Esophagus squamous epithelium (tissue), 5 donors: ENCODE measurements at regions of chr3 and their contacts with region 1.

Region 1: GRCh38 chr3:43162230-43163084 is 56.6 kb upstream of the POMGNT2 start:
- DNase-seq: no peak
- H3K4me3 ChIP-seq: peak overlapping the region in 1 of 4 donors; percentile 37
- H3K27ac ChIP-seq: peak overlapping the region in 2 of 4 donors; percentile 57 to 58
- H3K4me1 ChIP-seq: peaks cover 0 to 14% (median 7%) of the 10 kb centered on the region in 3 donors
- H3K27me3 ChIP-seq: peaks cover 0 to under 1% (median 0%) of the 10 kb centered on the region in 4 donors
- CTCF ChIP-seq: peak in 5 of 6 experiments; percentile 28 to 60 (median 33)
- POLR2A ChIP-seq: no peak

Region 2: GRCh38 chr3:43378066-43378935 is 215.8 kb after region 1 on chr3:
- intact Hi-C with region 1: loop called (anchors 5 kb)
- DNase-seq: no peak
- H3K4me3 ChIP-seq: no peak overlapping the region
- H3K27ac ChIP-seq: peak overlapping the region in 3 of 4 donors; percentile 58 to 68 (median 65)
- H3K4me1 ChIP-seq: peaks cover 0 to 15% (median 0%) of the 10 kb centered on the region in 3 donors
- H3K27me3 ChIP-seq: no peaks in the 10 kb centered on the region
- CTCF ChIP-seq: peak; percentile 27 to 81 (median 66)
- POLR2A ChIP-seq: no peak

Region 3: DNA sequence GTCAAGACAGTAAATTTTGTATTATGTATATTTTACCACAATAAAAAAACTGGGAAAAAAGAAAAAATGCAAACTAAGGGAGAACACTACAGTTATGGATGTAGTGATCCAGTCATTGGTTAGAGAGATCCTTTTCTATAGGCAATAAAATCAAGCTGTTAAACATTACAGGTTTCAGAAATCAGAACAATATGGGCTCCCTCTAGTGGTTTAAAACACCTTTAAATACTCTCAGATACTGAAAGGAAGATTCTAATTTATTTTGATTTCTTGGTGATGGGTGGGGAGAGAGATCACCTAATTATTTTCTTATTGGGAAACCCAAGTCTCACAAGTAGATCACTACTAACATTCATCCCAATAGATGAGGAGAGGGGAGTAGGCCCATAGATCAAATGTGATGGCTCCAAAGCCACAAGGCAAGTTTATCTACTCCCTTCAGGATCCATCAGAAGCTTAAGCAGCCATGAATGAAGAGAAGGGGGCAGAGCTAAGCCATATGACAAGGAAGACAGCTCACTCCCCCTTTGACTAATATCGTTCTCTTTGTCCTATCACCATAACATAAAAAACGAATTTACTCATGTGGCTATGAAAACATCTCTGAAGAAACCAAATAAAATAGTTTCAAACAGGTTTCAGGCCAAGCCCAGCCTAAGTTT is 340.7 kb after region 1 on chr3:
- intact Hi-C with region 1: loop called (anchors 10 kb)
- DNase-seq: no peak
- H3K4me3 ChIP-seq: no peak overlapping the region
- H3K27ac ChIP-seq: no peak overlapping the region
- H3K4me1 ChIP-seq: peaks cover 0 to 7% (median 0%) of the 10 kb centered on the region in 3 donors
- H3K27me3 ChIP-seq: no peaks in the 10 kb centered on the region
- CTCF ChIP-seq: peak; percentile 30 to 57 (median 40)
- POLR2A ChIP-seq: no peak

Region 4: GRCh38 chr3:43559963-43560362 is 397.5 kb after region 1 on chr3:
- intact Hi-C with region 1: no loop called
- DNase-seq: no peak
- H3K4me3 ChIP-seq: no peak overlapping the region
- H3K27ac ChIP-seq: no peak overlapping the region
- H3K4me1 ChIP-seq: no peaks in the 10 kb centered on the region
- H3K27me3 ChIP-seq: no peaks in the 10 kb centered on the region
- CTCF ChIP-seq: no peak
- POLR2A ChIP-seq: no peak